Activated T-helper 1 cell treated with anti-CD3 and anti-CD28 coated beads, Interleukin-12 subunit alpha, Interleukin-12 subunit beta, Interleukin-2, Interleukin-4 antibody, amounts not matched to agents 30 ng/mL and 10 ng/mL and 1 ng/mL, durations not matched to agents 14 hours and 24 hours and 36 hours (primary cell): ENCODE measurements at regions of chr15 and their contacts with region 1.

Region 1: GRCh38 chr15:99845009-99845408 is 111.8 kb upstream of the LYSMD4 start:
- DNase-seq: no peak
- H3K4me3 Mint-ChIP-seq: no peak overlapping the region
- H3K27ac Mint-ChIP-seq: peak overlapping the region; percentile 70
- H3K4me1 Mint-ChIP-seq: peaks cover 40% of the 10 kb centered on the region
- H3K27me3 Mint-ChIP-seq: no peaks in the 10 kb centered on the region

Region 2: DNA sequence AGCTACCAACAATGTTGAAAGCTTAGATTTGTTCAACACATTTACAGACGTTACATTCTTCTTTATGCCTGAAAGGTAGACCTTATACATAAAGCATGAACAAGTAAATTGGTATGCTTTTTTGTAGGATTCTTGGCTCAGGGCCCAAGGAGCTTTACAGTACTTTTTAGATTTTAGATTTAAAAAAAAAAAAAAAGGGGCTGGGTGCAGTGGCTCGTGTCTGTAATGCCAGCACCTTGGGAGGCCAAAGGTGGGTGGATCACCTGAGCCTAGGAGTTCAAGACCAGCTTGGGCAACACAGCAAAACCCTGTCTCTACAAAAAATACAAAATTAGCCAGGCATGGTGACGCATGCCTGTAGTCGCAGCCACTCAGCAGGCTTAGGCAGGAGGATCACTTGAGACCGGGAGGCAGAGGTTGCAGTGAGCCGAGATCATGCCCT is 239.5 kb before region 1 on chr15:
- intact Hi-C with region 1: loop called (anchors 10 kb)
- DNase-seq: no peak
- H3K4me3 Mint-ChIP-seq: no peak overlapping the region
- H3K27ac Mint-ChIP-seq: peak overlapping the region; percentile 82
- H3K4me1 Mint-ChIP-seq: peaks cover 33% of the 10 kb centered on the region
- H3K27me3 Mint-ChIP-seq: no peaks in the 10 kb centered on the region

Region 3: GRCh38 chr15:99826157-99826780 is 18.7 kb before region 1 on chr15:
- intact Hi-C with region 1: loop called (anchors 1 kb)
- DNase-seq: no peak
- H3K4me3 Mint-ChIP-seq: no peak overlapping the region
- H3K27ac Mint-ChIP-seq: peak overlapping the region; percentile 84
- H3K4me1 Mint-ChIP-seq: peaks cover 30% of the 10 kb centered on the region
- H3K27me3 Mint-ChIP-seq: no peaks in the 10 kb centered on the region